Prostate gland (tissue), 2 donors: ENCODE measurements at regions of chr5 and their contacts with region 1.

Region 1: DNA sequence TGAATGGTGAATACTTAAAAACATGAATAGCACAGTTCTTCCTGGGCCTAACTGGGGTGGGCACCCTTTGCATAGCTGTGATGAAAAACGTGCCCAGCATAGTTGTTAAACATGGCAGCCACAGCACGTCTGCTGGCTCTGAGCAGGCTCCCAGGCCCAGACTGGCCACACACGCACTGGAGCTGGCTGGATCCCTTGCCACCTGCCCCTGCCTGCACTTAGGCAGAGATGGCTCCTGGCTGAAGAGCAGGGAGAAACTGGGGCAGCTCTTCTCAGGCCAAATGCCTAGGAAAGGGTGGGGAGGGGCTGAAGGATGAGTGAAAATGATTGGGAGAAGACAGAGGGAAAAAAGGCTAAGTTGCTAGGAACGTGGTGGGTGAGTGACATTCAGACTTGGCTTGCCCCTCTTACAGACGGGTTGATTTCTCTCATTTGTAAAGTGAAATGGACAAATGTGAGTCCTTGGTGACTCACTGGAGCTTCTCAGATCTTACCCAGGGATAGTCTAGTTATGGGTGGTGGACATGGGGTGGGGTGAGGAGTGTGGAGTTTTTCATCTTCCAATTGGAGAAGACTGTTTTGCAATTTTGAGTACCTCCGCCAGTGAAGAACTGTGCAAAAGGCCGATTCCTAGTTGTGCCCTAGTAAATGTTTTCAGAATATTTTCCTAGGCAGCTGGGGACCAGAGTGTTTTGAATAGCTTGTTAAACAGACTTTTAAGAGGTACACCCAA is 42.4 kb downstream of the TRIO start:
- DNase-seq: no peak
- H3K4me3 ChIP-seq: no peak overlapping the region
- H3K27ac ChIP-seq: peak overlapping the region; percentile 72
- H3K4me1 ChIP-seq: peaks cover 3% of the 10 kb centered on the region
- H3K27me3 ChIP-seq: no peaks in the 10 kb centered on the region
- CTCF ChIP-seq: no peak
- POLR2A ChIP-seq: no peak

Region 2: GRCh38 chr5:14142827-14143548 is 42.5 kb before region 1 on chr5 and contains the start of gene TRIO:
- intact Hi-C with region 1: loop called (anchors 2 kb)
- DNase-seq: peak; percentile 93
- H3K4me3 ChIP-seq: peak within 1 kb of the TSS; percentile 65 to 73
- H3K27ac ChIP-seq: peak within 1 kb of the TSS; percentile 94 to 95
- H3K4me1 ChIP-seq: peaks cover 2% of the 10 kb centered on the region
- H3K27me3 ChIP-seq: no peaks in the 10 kb centered on the region
- CTCF ChIP-seq: peak in 3 of 4 experiments; percentile 46 to 61 (median 59)
- POLR2A ChIP-seq: peak; percentile 71
- total RNA-seq, gene TRIO: 90.3 to 197 TPM

Region 3: GRCh38 chr5:14234219-14234618 is 48.7 kb after region 1 on chr5:
- intact Hi-C with region 1: no loop called
- DNase-seq: no peak
- H3K4me3 ChIP-seq: no peak overlapping the region
- H3K27ac ChIP-seq: no peak overlapping the region
- H3K4me1 ChIP-seq: no peaks in the 10 kb centered on the region
- H3K27me3 ChIP-seq: no peaks in the 10 kb centered on the region
- CTCF ChIP-seq: no peak
- POLR2A ChIP-seq: no peak

Region 4: GRCh38 chr5:14298126-14298847 is 112.8 kb after region 1 on chr5:
- intact Hi-C with region 1: no loop called
- DNase-seq: no peak
- H3K4me3 ChIP-seq: no peak overlapping the region
- H3K27ac ChIP-seq: no peak overlapping the region
- H3K4me1 ChIP-seq: no peaks in the 10 kb centered on the region
- H3K27me3 ChIP-seq: no peaks in the 10 kb centered on the region
- CTCF ChIP-seq: no peak
- POLR2A ChIP-seq: no peak